ENCODE measurements at regions of chr1 and their contacts with region 1.

Region 1: DNA sequence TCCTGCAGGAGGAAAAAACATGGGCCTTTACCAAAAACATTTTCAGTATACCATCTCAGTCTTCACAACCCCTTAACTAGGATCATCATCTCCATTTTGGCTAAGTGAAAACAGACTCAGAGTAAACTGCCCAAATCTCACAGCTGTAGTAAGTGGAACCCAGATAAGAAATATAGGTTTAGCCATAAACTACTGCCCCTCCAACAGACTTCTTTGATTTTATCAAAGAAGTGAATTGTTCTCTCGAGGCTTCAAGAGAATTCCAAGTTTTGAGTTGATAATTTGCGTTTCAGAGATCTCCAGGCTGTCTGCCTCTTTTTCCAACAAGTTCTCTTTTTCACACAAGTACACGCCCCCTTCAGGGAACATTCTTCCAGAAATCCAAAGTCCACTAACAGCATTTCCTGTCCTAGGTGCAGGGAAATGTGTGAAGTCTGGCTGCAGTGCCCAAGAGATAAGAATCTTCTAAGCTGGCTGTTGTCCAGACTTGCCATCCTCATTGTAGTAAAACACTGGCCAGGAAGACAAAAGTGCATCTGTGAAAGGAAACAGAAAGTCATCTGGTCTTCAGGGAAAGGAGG is 30.8 kb downstream of the RNF19B start:
- DNase-seq: peak; percentile 77
- H3K4me3 ChIP-seq: no peak overlapping the region
- H3K27ac ChIP-seq: peak overlapping the region; percentile 82 to 89 (median 85)
- H3K4me1 ChIP-seq: peaks cover 6 to 50% (median 34%) of the 10 kb centered on the region in 4 donors
- H3K27me3 ChIP-seq: no peaks in the 10 kb centered on the region
- CTCF ChIP-seq: peak in 2 of 5 experiments; percentile 38 to 58
- EP300 ChIP-seq: peak; percentile 69
- POLR2A ChIP-seq: no peak

Region 2: DNA sequence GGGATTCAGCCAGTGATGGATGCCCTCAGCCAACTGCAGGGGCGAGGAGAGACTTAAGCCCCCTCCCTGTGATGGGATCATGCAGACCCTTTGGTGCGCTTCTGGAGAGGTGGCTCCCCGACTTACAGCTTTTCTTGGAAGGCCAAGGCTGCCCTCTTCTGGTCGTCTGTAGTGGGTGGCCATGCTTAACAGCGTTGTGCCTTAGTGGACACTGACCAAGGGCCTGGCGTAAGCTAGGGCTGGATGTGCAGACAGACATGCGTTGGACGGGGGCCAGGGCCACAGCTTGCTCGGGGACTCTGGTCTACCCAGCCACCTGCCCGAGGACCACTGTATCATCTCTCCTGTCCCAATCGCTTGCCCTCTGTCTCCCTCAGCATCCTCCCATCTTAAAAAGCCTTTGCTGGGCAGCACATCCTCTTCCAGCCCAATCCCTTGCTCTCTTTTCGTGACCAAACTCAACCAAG is 152.6 kb after region 1 on chr1:
- in situ Hi-C with region 1: no loop called
- intact Hi-C with region 1: loop called (anchors 2 kb)
- DNase-seq: peak; percentile 72
- H3K4me3 ChIP-seq: no peak overlapping the region
- H3K27ac ChIP-seq: no peak overlapping the region
- H3K4me1 ChIP-seq: peaks cover 0 to 20% (median 9%) of the 10 kb centered on the region in 4 donors
- H3K27me3 ChIP-seq: no peaks in the 10 kb centered on the region
- CTCF ChIP-seq: peak; percentile 65 to 71 (median 68)
- EP300 ChIP-seq: no peak
- POLR2A ChIP-seq: no peak

Region 3: GRCh38 chr1:33633019-33633801 is 699.4 kb after region 1 on chr1:
- in situ Hi-C with region 1: no loop called
- intact Hi-C with region 1: no loop called
- DNase-seq: peak; percentile 88
- H3K4me3 ChIP-seq: no peak overlapping the region
- H3K27ac ChIP-seq: no peak overlapping the region
- H3K4me1 ChIP-seq: no peaks in the 10 kb centered on the region
- H3K27me3 ChIP-seq: peaks cover 16% of the 10 kb centered on the region
- CTCF ChIP-seq: peak; percentile 77 to 97 (median 94)
- EP300 ChIP-seq: no peak
- POLR2A ChIP-seq: no peak